Psoas muscle (tissue), 8 donors: ENCODE measurements at regions of chr7 and their contacts with region 1.

Region 1: GRCh38 chr7:102236592-102237287 is 49.9 kb upstream of the SH2B2 start:
- DNase-seq: peak; percentile 47 to 72
- ATAC-seq: peak; percentile 71 to 94 (median 84)
- H3K4me3 ChIP-seq: no peak overlapping the region
- H3K27ac ChIP-seq: no peak overlapping the region
- H3K4me1 ChIP-seq: no peaks in the 10 kb centered on the region
- H3K27me3 ChIP-seq: no peaks in the 10 kb centered on the region
- CTCF ChIP-seq: peak; percentile 78

Region 2: GRCh38 chr7:101743241-101743994 is 493.3 kb before region 1 on chr7:
- intact Hi-C with region 1: loop called in 1 of 2 experiments (anchors 5 kb)
- DNase-seq: peak; percentile 61 to 72
- ATAC-seq: peak; percentile 32 to 86 (median 60)
- H3K4me3 ChIP-seq: peak overlapping the region; percentile 67
- H3K27ac ChIP-seq: no peak overlapping the region
- H3K4me1 ChIP-seq: no peaks in the 10 kb centered on the region
- H3K27me3 ChIP-seq: no peaks in the 10 kb centered on the region
- CTCF ChIP-seq: peak; percentile 48

Region 3: DNA sequence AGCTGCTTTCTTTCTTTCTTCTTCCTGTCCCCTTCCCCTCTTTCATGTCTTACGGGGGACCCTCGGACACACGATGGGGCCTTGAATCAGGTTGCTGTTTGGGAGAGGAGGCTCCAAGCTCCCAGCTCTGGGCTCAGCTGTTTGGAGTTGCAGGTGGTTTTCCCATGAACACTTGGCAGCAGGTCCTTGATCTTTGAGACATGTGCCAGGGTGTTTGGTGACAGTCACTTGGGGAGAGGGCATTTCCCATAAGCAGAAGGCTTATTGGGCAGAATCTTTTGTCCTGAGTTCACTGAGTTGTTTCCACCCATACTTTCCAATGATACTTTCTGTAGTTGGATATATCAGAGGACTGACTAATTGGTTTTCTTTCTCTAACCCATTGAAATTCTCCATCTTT is 54.7 kb before region 1 on chr7:
- intact Hi-C with region 1: no loop called
- DNase-seq: no peak
- ATAC-seq: peak; percentile 76 to 92 (median 88)
- H3K4me3 ChIP-seq: no peak overlapping the region
- H3K27ac ChIP-seq: peak overlapping the region; percentile 61
- H3K4me1 ChIP-seq: peaks cover 9% of the 10 kb centered on the region
- H3K27me3 ChIP-seq: no peaks in the 10 kb centered on the region
- CTCF ChIP-seq: no peak

Region 4: DNA sequence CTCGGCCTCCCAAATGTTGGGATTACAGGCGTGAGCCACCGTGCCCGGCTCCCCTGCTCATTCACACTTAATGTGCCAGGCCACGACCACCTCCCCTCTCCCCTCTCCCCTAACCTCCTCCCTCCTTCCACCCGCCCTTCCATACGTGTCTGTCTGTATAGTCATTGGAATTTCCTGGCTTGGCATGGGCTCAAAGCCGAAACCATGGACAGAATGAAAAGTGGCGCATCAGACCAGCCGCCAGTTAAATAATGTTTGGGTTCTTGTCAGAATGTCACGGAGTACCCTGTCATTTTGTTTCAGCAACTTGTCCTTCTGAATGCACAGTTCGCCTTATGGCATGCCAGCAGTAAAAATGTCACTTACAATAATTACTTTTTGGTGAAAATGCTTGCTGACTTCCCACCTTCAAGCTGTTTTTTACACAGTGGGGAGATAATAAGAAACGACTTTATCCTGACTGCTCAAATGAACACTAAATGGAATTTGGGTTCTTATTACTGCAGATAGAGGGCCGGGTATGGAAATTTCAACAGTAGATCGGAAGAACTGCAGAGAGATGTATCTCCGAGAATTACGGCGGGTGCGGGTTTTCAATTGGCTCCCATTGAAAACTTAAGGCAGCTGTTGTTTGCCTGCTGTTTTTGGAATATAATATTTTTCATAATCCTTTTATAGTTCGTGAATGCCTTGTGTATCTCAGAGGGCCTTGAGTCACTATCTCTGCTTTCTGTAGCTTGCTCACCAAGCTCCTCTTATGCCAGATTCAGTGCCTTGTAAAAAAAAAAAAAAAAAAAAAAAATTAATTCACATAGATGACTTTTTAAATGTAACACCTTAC is 15.6 kb before region 1 on chr7:
- intact Hi-C with region 1: no loop called
- DNase-seq: no peak
- ATAC-seq: no peak
- H3K4me3 ChIP-seq: no peak overlapping the region
- H3K27ac ChIP-seq: no peak overlapping the region
- H3K4me1 ChIP-seq: no peaks in the 10 kb centered on the region
- H3K27me3 ChIP-seq: no peaks in the 10 kb centered on the region
- CTCF ChIP-seq: no peak